Mammary epithelial cell (primary cell): ENCODE measurements at regions of chr3 and their contacts with region 1.

Region 1: DNA sequence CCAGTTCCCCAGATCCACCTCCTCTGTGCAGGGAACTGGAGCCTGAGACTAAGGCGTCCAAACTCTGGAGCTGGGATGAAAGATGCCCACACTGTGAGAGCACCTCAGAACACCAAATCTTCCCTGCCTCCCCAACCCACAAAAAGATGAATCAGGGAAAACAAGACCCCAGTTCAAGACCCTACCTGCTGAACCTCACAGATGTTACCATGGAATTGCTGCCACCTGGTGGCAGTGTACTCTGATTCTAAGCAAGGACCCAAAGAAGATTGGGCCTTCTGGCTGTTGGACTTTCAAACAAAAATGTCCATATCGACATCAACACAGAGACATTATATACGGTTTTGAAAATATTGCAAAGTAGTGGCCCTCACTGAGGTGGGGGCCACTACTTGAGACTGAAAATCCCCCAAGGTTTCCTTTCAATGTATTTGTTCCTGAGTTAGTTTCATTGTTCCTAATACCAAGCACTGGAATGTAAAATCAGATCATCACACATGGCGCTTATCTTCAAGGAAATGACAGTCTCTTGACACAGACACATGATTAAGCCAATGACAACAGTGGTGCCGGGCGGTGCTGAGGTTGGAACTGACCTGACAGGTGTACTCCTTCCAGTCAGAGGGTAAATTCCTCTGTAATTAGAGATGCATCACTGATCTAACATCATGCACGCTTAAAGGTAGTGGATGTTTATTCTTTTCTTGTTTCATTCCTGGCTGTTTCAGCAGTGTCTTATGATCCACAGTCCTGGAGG is 67.6 kb downstream of the SLC6A11 start:
- DNase-seq: peak; percentile 43
- H3K4me3 ChIP-seq: no peak overlapping the region
- H3K27ac ChIP-seq: no peak overlapping the region
- H3K4me1 ChIP-seq: peaks cover 23% of the 10 kb centered on the region
- H3K27me3 ChIP-seq: no peaks in the 10 kb centered on the region
- CTCF ChIP-seq: peak; percentile 62 to 72

Region 2: DNA sequence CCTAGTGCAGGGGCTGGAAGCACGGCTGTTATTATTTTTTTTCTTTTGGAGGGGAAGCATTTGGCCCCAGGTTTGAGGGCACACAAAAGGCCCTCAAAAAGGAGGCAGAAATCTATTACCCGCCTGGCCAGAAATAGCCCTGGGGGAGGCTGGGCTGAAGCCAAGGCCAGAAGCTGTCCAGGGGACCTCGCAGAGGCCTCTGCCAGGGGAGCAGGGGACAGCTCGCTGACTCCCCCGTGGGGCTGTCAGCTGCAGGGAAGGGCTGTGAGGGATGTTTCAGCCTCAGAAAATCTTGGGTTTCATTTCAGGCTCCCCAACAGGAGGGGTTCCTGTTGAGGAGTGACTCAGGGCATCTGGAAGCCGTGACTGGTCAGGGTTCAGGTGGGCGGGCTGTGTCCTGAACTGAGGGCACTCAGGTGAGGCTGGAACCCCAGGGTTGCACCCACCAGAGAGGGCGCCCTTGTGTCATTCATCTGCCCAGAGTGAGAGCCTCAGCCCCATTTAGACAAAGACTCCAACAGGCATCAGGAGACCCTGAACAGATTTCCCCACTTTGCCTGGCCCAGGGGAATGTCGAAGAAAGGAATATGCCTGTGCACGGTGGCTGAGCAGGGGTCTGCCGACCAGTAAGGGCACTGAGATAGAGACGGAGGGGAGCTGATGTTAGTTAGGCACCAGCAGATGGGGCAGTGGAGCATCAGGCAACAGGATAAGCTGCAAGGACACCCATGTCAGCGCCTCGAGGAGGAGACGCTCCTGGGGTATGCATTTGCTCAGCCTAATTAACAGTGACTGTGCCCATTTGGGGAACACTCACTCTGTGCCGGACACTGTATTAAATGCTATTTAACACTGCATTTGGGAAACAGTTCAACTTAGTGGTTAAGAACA is 111.1 kb before region 1 on chr3:
- CTCF ChIA-PET with region 1: no interaction called
- dilution Hi-C with region 1: no loop called
- in situ Hi-C with region 1: no loop called
- intact Hi-C with region 1: loop called (anchors 1 kb)
- DNase-seq: peak; percentile 81
- H3K4me3 ChIP-seq: no peak overlapping the region
- H3K27ac ChIP-seq: peak overlapping the region; percentile 86
- H3K4me1 ChIP-seq: peaks cover 26% of the 10 kb centered on the region
- H3K27me3 ChIP-seq: no peaks in the 10 kb centered on the region
- CTCF ChIP-seq: peak; percentile 53 to 75

Region 3: GRCh38 chr3:10822708-10823515 is 60.7 kb before region 1 on chr3:
- CTCF ChIA-PET with region 1: no interaction called
- dilution Hi-C with region 1: no loop called
- in situ Hi-C with region 1: no loop called
- intact Hi-C with region 1: loop called (anchors 5 kb)
- DNase-seq: no peak
- H3K4me3 ChIP-seq: no peak overlapping the region
- H3K27ac ChIP-seq: no peak overlapping the region
- H3K4me1 ChIP-seq: no peaks in the 10 kb centered on the region
- H3K27me3 ChIP-seq: no peaks in the 10 kb centered on the region
- CTCF ChIP-seq: no peak

Region 4: GRCh38 chr3:10835406-10835805 is 48.2 kb before region 1 on chr3:
- CTCF ChIA-PET with region 1: no interaction called
- dilution Hi-C with region 1: no loop called
- in situ Hi-C with region 1: no loop called
- intact Hi-C with region 1: loop called (anchors 1 kb)
- DNase-seq: no peak
- H3K4me3 ChIP-seq: no peak overlapping the region
- H3K27ac ChIP-seq: no peak overlapping the region
- H3K4me1 ChIP-seq: no peaks in the 10 kb centered on the region
- H3K27me3 ChIP-seq: no peaks in the 10 kb centered on the region
- CTCF ChIP-seq: peak in 1 of 2 donors; percentile 9

Region 5: DNA sequence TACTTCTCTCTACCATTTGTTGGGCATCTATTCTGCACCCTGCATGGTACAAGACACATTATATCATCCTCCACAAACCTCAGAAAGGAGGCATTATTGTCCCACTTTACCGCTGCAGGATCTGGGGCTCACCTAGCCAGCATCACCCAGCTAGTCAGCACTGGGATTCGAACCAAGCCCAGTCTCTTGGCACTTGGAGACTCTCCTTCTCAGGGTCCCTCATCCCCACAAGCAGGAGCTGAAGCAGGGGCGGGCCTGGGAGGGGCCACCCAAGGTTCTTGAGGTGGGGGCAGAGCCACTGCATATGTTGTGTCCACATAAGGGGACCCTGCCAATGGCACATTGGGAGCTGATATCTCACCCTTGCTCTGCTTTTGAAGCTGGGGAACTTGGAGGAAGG is 150.2 kb after region 1 on chr3:
- CTCF ChIA-PET with region 1: no interaction called
- dilution Hi-C with region 1: no loop called
- in situ Hi-C with region 1: no loop called
- intact Hi-C with region 1: no loop called
- DNase-seq: no peak
- H3K4me3 ChIP-seq: no peak overlapping the region
- H3K27ac ChIP-seq: no peak overlapping the region
- H3K4me1 ChIP-seq: no peaks in the 10 kb centered on the region
- H3K27me3 ChIP-seq: peaks cover 6% of the 10 kb centered on the region
- CTCF ChIP-seq: no peak

Region 6: GRCh38 chr3:11271986-11272904 is 388.6 kb after region 1 on chr3 and contains the start of gene ATG7:
- CTCF ChIA-PET with region 1: no interaction called
- dilution Hi-C with region 1: no loop called
- in situ Hi-C with region 1: no loop called
- intact Hi-C with region 1: no loop called
- DNase-seq: peak; percentile 92
- H3K4me3 ChIP-seq: peak within 1 kb of the TSS; percentile 83 to 91 (median 91)
- H3K27ac ChIP-seq: peak within 1 kb of the TSS; percentile 96
- H3K4me1 ChIP-seq: peaks cover 13% of the 10 kb centered on the region
- H3K27me3 ChIP-seq: no peaks in the 10 kb centered on the region
- CTCF ChIP-seq: peak in 1 of 2 donors; percentile 12
- total RNA-seq, gene ATG7: 35.3 to 51.2 TPM